ENCODE measurements at regions of chr13 and their contacts with region 1.

Region 1: DNA sequence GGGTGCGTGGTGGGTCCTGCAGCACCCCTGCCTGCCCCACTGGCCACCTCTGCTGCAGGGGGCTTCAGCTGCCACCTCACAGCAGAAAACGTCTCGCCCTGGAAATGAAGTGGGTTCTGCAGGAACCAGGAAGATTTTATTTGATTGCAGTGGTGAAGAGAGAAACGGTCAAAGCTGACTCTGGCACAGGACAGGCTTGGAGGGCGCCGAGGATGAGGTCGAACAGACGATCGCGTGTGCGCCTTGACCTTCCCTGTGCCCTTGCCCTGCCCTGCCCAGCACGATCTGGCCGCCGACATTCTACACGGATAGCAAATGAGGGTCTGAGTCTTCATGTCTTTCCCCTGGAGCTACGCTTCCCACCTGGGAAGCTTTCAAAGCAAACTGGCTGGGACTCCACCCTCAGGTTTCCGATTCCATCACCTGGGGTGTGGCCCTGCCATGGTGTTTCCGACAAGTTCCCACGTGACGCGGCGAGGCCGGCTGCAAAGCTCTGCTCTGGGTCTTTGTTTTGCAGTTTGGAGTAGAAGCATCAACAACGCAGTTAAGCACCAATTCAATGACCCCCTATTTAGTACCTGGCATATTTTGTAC is 50.3 kb upstream of the TUBGCP3 start:
- DNase-seq: no peak
- H3K4me3 Mint-ChIP-seq: no peak overlapping the region
- H3K27ac Mint-ChIP-seq: no peak overlapping the region
- H3K4me1 Mint-ChIP-seq: peaks cover 16% of the 10 kb centered on the region
- H3K27me3 Mint-ChIP-seq: peaks cover 60% of the 10 kb centered on the region

Region 2: DNA sequence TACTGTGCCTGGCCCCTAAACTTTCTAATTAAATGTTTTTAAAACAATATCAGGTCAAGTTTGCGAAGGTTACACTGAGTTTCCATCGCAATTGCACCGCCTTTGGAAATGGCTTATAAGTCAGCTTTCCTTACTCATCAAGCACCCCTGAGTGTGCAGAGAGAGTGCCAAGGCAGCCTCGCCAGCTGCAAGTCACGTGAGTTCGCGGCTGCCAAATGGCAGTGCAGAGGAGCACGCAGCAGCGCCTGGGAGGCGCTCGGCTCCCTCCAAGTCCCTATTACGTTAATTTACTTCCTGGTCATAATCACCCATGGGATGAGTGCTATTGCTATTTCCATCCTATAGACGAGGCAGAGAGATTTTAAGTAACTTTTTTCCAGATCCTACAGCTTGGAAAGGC is 998.2 kb before region 1 on chr13:
- CTCF ChIA-PET with region 1: no interaction called
- DNase-seq: no peak
- H3K4me3 Mint-ChIP-seq: no peak overlapping the region
- H3K27ac Mint-ChIP-seq: no peak overlapping the region
- H3K4me1 Mint-ChIP-seq: no peaks in the 10 kb centered on the region
- H3K27me3 Mint-ChIP-seq: no peaks in the 10 kb centered on the region

Region 3: DNA sequence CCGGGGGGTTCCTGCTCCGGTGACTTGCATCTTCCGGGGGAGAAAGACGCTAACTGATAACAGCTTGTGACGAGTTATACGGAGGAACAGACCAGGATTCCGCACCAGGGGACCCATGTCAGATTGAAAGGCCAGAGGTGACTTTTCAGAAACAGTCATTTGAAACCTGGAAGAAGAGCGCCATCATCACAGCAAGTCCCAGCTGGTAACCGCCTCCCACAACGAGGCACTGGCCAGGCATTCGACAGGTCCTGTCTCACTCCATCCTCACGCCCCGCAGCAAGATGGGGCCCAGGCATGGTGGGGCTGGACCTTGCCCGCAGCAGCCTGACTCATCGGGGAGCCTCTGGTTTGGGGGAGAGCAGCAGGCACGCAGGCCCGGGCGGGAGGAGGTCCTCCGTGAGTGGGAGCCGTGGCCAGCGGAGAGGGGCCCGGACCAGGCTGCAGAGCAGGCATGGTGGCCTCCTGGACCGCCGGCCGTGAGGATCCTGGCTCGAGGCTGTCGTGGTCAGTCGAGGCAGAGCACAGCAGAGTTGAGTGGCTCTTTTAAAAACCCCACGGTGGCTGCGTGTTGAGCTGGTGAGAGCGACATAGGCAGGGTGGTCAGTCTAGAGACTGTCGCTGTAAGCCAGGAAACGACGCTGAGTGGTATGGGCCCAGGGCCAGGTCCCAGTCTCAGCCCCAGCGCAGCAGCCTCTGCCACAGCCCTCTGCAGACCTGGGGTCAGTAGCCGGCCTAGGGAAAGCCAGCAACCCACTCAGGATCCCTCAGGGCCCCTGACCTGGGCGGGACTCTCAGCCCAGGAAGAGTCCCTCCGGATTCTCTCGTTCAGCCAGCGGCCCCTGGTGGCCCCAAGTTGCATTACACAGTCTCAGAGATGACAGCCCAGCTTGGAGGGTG is 235.8 kb after region 1 on chr13:
- CTCF ChIA-PET with region 1: interaction called, 23 read pairs
- DNase-seq: peak; percentile 38
- H3K4me3 Mint-ChIP-seq: no peak overlapping the region
- H3K27ac Mint-ChIP-seq: peak overlapping the region; percentile 88
- H3K4me1 Mint-ChIP-seq: peaks cover 22% of the 10 kb centered on the region
- H3K27me3 Mint-ChIP-seq: peaks cover 9% of the 10 kb centered on the region

Measured in activated naive CD4-positive, alpha-beta T cell treated with anti-CD3 and anti-CD28 coated beads, Interleukin-2, amount 10 ng/mL, durations not matched to agents 7 days and 5 days (primary cell).